ENCODE measurements at regions of chr7 and their contacts with region 1.

Region 1: DNA sequence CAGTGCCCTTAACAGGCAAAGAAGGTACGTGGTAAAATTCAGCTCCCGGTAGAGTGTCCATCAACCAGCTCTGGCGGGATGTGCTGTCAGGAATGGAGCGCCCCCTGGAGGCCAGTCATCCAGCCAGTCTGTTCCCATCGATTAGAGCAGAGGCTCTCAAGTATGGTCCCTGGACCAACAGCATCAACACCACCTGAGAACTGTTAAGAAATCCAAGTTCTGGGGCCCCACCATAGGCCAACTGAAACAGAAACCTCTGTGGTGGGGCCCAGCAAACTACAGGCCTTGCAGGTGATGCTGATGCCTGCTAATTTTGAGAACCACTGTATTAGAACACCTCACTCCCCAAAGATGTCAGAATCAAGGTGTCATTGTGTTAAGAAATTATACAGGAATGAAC is 109.2 kb downstream of the DPY19L1 start:
- DNase-seq: peak; percentile 22
- H3K4me3 Mint-ChIP-seq: no peak overlapping the region
- H3K27ac Mint-ChIP-seq: no peak overlapping the region
- H3K4me1 Mint-ChIP-seq: peaks cover 7% of the 10 kb centered on the region
- H3K27me3 Mint-ChIP-seq: peaks cover 2% of the 10 kb centered on the region

Region 2: DNA sequence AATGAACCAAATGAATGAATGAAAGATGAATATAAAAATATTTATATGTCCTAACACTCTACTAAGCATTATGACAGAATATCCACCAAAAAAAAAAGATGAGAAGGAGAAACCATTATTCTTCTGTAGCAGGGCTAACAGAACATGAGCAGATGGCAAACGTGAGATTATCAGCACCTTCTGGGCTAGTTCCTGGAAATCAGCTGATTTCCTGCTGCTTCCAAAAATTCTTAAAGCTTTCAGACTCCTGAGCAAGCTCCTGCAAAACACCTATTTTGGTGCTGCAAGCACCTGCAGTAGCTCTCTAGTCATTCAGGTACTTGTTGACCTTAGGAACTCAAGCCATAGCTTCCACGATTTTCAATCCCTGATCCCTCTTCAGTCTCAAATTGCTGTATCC is 218.3 kb before region 1 on chr7:
- intact Hi-C with region 1: no loop called
- DNase-seq: no peak
- H3K4me3 Mint-ChIP-seq: no peak overlapping the region
- H3K27ac Mint-ChIP-seq: no peak overlapping the region
- H3K4me1 Mint-ChIP-seq: no peaks in the 10 kb centered on the region
- H3K27me3 Mint-ChIP-seq: peaks cover 2% of the 10 kb centered on the region

Region 3: DNA sequence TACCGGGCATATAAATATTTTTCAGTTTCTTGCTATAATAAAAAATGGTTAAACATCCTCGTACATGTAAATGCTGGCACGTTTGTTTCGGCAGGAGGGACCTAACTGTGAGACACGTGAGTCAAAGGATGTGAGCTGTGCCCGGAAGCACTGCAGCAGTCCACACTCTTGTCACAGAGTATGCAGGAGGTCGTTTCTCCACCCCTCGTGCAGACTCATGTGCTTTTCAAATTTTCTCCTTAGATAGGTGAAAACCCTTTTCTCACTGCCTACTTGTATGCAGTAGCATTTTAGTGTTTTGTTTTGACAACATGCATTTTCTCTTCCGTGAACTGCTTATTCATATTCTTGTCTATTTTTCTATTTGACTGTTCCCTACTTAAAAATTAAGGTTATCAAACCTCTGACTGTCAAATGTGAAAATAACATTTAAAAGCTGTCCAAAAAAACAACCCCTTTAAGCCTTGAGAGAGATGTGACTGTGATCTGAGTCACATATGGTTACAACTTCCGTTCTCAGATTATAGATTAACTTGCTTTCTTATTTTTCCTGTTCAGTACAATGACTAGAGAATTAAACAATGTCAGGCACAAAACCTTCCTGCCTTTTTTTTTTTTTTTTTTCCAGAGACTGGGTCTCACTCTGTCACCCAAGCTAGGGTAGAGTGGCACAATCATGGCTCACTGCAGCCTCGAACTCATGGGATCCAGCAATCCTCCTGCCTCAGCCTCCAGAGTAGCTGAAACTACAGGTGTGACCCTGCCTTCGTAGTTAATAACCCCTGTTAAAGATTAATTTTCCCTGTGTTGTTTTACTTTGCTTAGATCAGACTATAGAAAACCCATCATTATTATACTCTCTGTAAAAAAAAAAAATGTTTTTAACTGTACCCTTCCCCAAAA is 64.1 kb after region 1 on chr7:
- intact Hi-C with region 1: loop called (anchors 5 kb)
- DNase-seq: peak; percentile 19
- H3K4me3 Mint-ChIP-seq: no peak overlapping the region
- H3K27ac Mint-ChIP-seq: peak overlapping the region; percentile 79
- H3K4me1 Mint-ChIP-seq: peaks cover 37% of the 10 kb centered on the region
- H3K27me3 Mint-ChIP-seq: no peaks in the 10 kb centered on the region

Measured in activated T-helper 2 cell treated with anti-CD3 and anti-CD28 coated beads, Interferon-gamma antibody, Interleukin-2, Interleukin-4, amounts not matched to agents 10 μg/mL and 5 μg/mL and 100 μg/mL, durations not matched to agents 14 hours and 24 hours and 36 hours (primary cell).